ENCODE measurements at regions of chr22 and their contacts with region 1.

Region 1: GRCh38 chr22:29478326-29479276 is 1.4 kb upstream of the NEFH start:
- DNase-seq: no peak
- ATAC-seq: no peak
- H3K4me3 Mint-ChIP-seq: no peak overlapping the region
- H3K27ac Mint-ChIP-seq: no peak overlapping the region
- H3K4me1 Mint-ChIP-seq: peaks cover 35% of the 10 kb centered on the region
- H3K27me3 Mint-ChIP-seq: peaks cover 39% of the 10 kb centered on the region
- CTCF ChIP-seq: no peak

Region 2: GRCh38 chr22:29427176-29427760 is 51.3 kb before region 1 on chr22:
- CTCF ChIA-PET with region 1: no interaction called
- POLR2A ChIA-PET with region 1: no interaction called
- intact Hi-C with region 1: loop called (anchors 5 kb)
- DNase-seq: no peak
- ATAC-seq: no peak
- H3K4me3 Mint-ChIP-seq: no peak overlapping the region
- H3K27ac Mint-ChIP-seq: no peak overlapping the region
- H3K4me1 Mint-ChIP-seq: no peaks in the 10 kb centered on the region
- H3K27me3 Mint-ChIP-seq: peaks cover 10% of the 10 kb centered on the region
- CTCF ChIP-seq: no peak

Region 3: GRCh38 chr22:29512031-29512430 is 33.4 kb after region 1 on chr22:
- CTCF ChIA-PET with region 1: no interaction called
- POLR2A ChIA-PET with region 1: no interaction called
- intact Hi-C with region 1: loop called (anchors 5 kb)
- DNase-seq: no peak
- ATAC-seq: no peak
- H3K4me3 Mint-ChIP-seq: no peak overlapping the region
- H3K27ac Mint-ChIP-seq: no peak overlapping the region
- H3K4me1 Mint-ChIP-seq: no peaks in the 10 kb centered on the region
- H3K27me3 Mint-ChIP-seq: no peaks in the 10 kb centered on the region
- CTCF ChIP-seq: no peak

Measured in activated B cell treated with CpG ODN at 0.5 μM for 24 hours (primary cell).